ENCODE measurements at regions of chr19 and their contacts with region 1.

Region 1: DNA sequence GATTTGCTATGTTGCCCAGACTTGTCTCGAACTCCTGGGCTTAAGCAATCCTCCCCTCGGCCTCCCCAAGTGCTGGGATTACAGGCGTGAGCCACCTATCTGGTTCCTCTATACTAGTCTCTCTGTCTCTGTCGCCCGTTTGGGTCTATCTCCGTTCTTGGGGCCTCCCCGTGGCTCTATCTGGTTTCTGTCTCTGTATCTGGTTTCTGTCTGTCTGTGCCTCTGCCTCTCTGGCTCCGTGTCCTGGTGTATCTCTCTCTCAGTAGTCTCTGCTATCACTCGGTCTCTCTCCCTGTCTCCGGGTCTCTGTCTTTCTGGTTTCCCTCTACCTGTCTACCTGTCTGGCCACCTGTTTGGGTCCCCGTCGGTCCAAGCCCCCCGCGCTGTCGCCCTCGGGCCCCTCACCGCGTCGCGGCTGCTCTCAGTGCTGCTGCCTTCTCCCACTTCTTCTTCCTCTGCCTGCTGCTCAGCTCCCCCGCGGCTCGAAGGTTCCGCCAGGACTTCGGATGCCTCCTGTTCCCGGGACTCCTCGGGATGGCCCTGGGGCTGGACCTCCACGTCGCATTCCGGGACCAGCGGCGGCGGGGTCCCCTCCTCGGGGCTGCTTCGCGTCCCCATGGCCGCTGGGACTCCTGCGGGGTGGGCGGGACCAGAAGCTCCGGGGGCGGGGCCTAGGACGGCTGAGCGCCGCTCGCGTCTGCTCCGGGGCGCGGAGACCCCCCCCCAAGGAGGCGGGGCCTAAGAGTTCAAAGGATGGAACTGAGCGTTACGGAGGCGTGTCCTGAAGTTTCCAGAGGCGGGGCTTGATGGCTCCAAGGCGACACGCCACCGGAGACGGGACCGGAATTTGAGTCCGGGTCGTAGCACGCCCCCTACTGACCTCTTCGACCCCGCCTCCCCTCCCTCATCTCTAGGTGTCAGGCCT is 783 bp downstream of the PHLDB3 start:
- DNase-seq: peak; percentile 100
- ATAC-seq: peak; percentile 96
- H3K4me3 Mint-ChIP-seq: peak overlapping the region; percentile 96
- H3K27ac Mint-ChIP-seq: peak overlapping the region; percentile 94
- H3K4me1 Mint-ChIP-seq: peaks cover 32% of the 10 kb centered on the region
- H3K27me3 Mint-ChIP-seq: no peaks in the 10 kb centered on the region

Region 2: GRCh38 chr19:43474986-43475705 is 28.6 kb before region 1 on chr19:
- CTCF ChIA-PET with region 1: no interaction called
- POLR2A ChIA-PET with region 1: interaction called, 3 read pairs
- intact Hi-C with region 1: loop called (anchors 1 kb)
- DNase-seq: peak; percentile 98
- ATAC-seq: peak; percentile 86
- H3K4me3 Mint-ChIP-seq: peak overlapping the region; percentile 62
- H3K27ac Mint-ChIP-seq: peak overlapping the region; percentile 90
- H3K4me1 Mint-ChIP-seq: peaks cover 35% of the 10 kb centered on the region
- H3K27me3 Mint-ChIP-seq: no peaks in the 10 kb centered on the region

Region 3: GRCh38 chr19:43519436-43520088 is 15.8 kb after region 1 on chr19:
- CTCF ChIA-PET with region 1: interaction called, 20 read pairs
- POLR2A ChIA-PET with region 1: interaction called, 3 read pairs
- intact Hi-C with region 1: loop called (anchors 1 to 2 kb)
- DNase-seq: peak; percentile 90
- ATAC-seq: peak; percentile 100
- H3K4me3 Mint-ChIP-seq: no peak overlapping the region
- H3K27ac Mint-ChIP-seq: peak overlapping the region; percentile 19
- H3K4me1 Mint-ChIP-seq: peaks cover 17% of the 10 kb centered on the region
- H3K27me3 Mint-ChIP-seq: no peaks in the 10 kb centered on the region

Region 4: DNA sequence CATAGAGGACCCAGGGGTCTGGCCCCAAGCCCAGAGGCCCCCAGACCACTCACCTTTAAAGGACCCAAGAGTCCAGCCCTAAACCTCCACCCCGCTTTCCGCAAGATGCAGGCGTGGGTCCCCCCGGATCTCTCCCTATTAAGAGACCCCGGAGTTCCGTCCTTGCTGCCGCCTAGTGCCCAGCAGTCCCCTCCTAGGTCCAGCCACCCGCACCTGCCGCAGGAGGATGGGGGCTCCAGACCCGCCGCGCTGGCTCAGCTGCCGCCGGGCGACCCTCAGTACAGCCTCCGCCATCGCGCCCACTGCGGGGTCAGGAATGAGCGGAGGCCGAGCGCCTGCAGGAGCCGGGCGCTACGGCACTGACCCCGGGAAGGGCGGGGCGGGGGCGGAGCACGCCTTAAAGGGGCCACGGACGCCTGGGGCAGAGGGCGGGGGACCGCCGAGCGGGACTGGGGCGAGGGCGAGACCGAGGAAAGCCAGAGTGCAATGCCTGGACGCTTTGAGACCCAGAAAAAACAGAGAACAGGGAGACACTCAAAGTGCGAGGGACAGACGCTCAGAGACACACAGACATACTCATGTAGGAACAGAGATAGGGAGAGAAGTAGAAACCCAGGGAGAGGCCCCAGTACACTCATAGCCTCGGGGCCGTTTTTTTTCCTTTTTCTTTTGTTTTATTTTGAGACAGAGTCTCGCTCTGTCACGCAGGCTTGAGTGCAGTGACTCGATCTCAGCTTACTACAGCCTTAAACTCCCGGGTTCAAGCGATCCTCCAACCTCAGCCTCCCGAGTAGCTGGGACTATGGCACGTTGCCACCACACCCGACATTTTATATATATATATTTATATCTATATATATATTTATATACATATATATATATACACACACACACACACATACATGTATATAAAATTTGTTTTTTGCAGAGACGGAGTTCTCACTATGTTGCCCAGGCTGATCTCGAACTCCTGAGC is 23.4 kb after region 1 on chr19 and contains the start of gene ETHE1:
- CTCF ChIA-PET with region 1: interaction called, 9 read pairs
- POLR2A ChIA-PET with region 1: interaction called, 6 read pairs
- intact Hi-C with region 1: loop called in 1 of 2 experiments (anchors 1 kb)
- DNase-seq: peak; percentile 87
- ATAC-seq: peak; percentile 70
- H3K4me3 Mint-ChIP-seq: peak within 1 kb of the TSS; percentile 92
- H3K27ac Mint-ChIP-seq: peak within 1 kb of the TSS; percentile 94
- H3K4me1 Mint-ChIP-seq: peaks cover 22% of the 10 kb centered on the region
- H3K27me3 Mint-ChIP-seq: no peaks in the 10 kb centered on the region
- total RNA-seq, gene ETHE1: 68.7 to 78.8 TPM

Region 5: DNA sequence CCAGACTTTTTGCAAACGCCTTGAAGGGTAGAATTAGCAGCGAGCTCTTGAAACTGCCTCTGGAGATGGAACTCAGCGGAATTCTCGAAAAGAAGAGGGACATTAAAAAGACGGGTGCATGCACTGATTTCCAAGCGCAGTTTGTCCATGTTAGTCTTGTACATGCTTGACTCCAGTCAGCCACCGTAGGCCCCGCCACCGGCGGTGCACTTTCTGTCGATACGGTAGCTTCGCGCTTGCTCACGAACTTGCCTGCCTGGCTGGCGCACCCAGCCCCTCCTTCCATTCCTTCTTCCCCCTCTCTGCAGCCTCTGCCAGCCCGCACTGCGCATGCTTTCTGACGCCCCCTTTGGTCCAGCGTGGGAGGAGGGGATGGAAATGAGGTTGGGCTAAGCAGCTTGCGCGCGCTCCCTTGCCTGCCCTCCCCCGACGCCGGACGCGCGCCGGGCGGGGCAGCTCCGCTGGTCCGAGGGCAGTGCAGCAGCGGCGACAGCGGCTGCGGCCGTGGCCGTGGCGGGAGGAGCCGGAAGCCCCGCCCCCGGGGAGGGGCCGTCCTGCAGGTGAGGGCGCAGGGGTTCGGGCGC is 29.3 kb after region 1 on chr19 and contains the start of gene ZNF575:
- CTCF ChIA-PET with region 1: no interaction called
- POLR2A ChIA-PET with region 1: interaction called, 6 read pairs
- intact Hi-C with region 1: loop called (anchors 1 kb)
- DNase-seq: peak; percentile 95
- ATAC-seq: peak; percentile 57
- H3K4me3 Mint-ChIP-seq: peak within 1 kb of the TSS; percentile 83
- H3K27ac Mint-ChIP-seq: peak within 1 kb of the TSS; percentile 97
- H3K4me1 Mint-ChIP-seq: peaks cover 20% of the 10 kb centered on the region
- H3K27me3 Mint-ChIP-seq: no peaks in the 10 kb centered on the region
- total RNA-seq, gene ZNF575: 3.4 to 4.3 TPM

Region 6: DNA sequence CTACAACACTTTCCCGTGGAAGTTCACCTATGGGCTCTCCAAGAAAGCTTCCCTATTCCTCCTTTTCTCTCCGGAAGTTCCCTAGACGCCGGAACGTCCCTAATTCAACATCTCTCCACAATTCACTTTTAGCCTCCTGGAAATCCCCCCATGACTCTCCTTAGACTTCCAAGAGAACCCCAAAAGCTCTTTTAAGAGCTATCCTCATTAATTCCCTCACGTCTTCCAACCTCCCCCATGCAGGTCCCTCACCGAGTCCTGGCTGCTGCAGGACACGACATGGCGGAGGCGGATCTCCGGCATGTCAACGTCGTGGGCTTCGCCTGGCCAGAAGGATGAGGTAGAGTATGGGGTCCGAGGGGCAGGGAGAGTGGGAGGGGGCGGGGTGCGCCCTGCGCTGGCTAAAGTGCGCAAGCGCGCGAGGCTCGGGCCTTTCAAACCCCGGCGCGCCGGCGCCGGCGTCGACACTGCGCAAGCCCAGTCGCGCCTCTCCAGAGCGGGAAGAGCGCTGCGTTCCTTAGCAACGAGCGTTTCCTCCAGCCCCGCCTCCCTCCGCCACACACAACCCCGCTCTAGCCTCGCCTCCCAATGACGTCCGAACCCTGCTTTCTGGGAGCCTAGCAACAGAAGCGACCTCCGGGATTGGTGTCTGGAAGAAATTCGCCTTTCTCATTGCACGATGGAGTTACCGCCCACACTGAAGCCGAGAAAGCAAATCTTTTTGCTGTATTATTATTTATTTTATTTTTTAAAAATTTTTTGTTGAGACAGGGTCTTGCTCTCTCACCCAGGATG is 71.6 kb after region 1 on chr19 and contains the starts of genes PINLYP and XRCC1:
- CTCF ChIA-PET with region 1: no interaction called
- POLR2A ChIA-PET with region 1: no interaction called
- intact Hi-C with region 1: loop called in 1 of 2 experiments (anchors 1 kb)
- DNase-seq: peak; percentile 99
- ATAC-seq: peak; percentile 99
- H3K4me3 Mint-ChIP-seq: peak within 1 kb of the TSS; percentile 87
- H3K27ac Mint-ChIP-seq: peak within 1 kb of the TSS; percentile 94
- H3K4me1 Mint-ChIP-seq: peaks cover 41% of the 10 kb centered on the region
- H3K27me3 Mint-ChIP-seq: no peaks in the 10 kb centered on the region
- total RNA-seq, gene PINLYP: 3.5 to 3.6 TPM
- total RNA-seq, gene XRCC1: 31.6 to 40.0 TPM

Region 7: DNA sequence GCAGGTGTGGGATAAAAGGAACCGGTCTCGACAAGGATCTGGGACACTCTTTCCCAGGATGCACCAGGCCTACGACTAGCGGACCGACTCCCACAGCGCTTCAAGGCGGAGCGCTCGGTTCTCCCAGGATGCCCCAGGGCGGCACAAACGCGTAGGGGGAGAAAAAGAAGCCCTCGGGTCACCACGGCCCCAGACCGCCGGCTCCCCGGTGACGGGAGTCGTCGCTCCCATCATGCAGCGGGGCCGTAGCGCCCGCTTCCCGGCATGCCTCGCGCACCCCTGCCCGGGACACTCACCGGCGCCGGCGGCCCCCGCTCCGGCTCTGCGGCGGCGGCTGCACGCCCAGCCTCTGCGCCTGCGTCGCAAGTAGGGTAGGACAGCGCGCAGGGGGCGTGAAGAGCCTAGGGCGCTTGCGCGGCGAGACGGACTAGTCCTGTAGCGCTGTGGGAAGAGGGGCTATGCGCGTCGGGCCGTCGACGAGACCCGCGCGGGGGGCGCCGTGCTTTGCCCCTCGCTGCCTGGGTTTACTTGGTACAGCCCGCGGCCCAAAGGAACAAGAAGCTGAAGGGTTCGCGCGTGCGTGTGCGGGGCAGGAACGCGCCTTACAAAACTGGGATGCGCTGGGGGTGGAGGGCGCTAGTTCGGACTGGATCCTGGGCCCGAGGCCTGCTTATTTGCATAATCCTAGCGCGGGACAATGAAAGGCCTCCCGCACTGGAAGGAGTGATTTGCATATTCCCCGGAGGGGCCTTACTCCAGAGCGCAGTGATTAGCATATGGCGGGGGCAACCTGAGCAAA is 115.7 kb after region 1 on chr19 and contains the start of gene ZNF428:
- CTCF ChIA-PET with region 1: no interaction called
- POLR2A ChIA-PET with region 1: no interaction called
- intact Hi-C with region 1: loop called in 1 of 2 experiments (anchors 1 kb)
- DNase-seq: peak; percentile 94
- ATAC-seq: peak; percentile 92
- H3K4me3 Mint-ChIP-seq: peak within 1 kb of the TSS; percentile 94
- H3K27ac Mint-ChIP-seq: peak within 1 kb of the TSS; percentile 99
- H3K4me1 Mint-ChIP-seq: peaks cover 17% of the 10 kb centered on the region
- H3K27me3 Mint-ChIP-seq: no peaks in the 10 kb centered on the region
- total RNA-seq, gene ZNF428: 9.0 to 10.1 TPM